Cardiac septum (tissue), 1 donor: ENCODE measurements at regions of chr17 and their contacts with region 1.

Region 1: GRCh38 chr17:13642188-13642587 is 40.5 kb upstream of the HS3ST3A1 start:
- DNase-seq: no peak

Region 2: DNA sequence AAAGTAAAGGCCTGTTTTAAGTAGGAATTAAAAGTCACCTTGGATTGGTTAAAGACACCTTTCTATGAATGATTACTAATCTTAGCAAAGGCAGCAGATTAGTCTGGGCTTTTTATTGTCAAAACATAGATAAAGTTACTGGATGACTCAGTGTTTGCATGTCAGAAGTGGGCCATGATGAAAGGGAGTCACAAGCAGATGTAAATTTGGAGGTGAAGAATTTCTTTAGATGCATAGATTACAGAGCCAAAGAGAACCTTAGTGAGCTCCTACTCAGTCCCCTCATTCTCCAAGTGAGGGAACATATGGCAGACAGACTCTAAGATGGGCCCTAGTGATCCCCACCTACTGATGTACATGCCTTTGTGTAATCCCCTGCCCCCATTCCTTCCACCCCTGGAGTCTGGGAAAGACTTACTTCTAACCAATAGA is 165.0 kb before region 1 on chr17:
- intact Hi-C with region 1: no loop called
- DNase-seq: no peak

Region 3: GRCh38 chr17:13888056-13888609 is 245.9 kb after region 1 on chr17:
- intact Hi-C with region 1: loop called (anchors 5 kb)
- DNase-seq: peak; percentile 78